ENCODE measurements at regions of chr7 and their contacts with region 1.

Region 1: GRCh38 chr7:41045556-41046123 is 657.2 kb downstream of the INHBA start:
- DNase-seq: peak; percentile 66 to 72
- H3K4me3 ChIP-seq: no peak overlapping the region
- H3K27ac ChIP-seq: no peak overlapping the region
- H3K4me1 ChIP-seq: no peaks in the 10 kb centered on the region
- H3K27me3 ChIP-seq: no peaks in the 10 kb centered on the region
- CTCF ChIP-seq: peak in 2 of 3 donors; percentile 65 to 67
- POLR2A ChIP-seq: no peak

Region 2: GRCh38 chr7:41031611-41032010 is 14.0 kb before region 1 on chr7:
- intact Hi-C with region 1: loop called (anchors 1 kb)
- DNase-seq: no peak
- H3K4me3 ChIP-seq: no peak overlapping the region
- H3K27ac ChIP-seq: no peak overlapping the region
- H3K4me1 ChIP-seq: no peaks in the 10 kb centered on the region
- H3K27me3 ChIP-seq: no peaks in the 10 kb centered on the region
- CTCF ChIP-seq: no peak
- POLR2A ChIP-seq: no peak

Region 3: DNA sequence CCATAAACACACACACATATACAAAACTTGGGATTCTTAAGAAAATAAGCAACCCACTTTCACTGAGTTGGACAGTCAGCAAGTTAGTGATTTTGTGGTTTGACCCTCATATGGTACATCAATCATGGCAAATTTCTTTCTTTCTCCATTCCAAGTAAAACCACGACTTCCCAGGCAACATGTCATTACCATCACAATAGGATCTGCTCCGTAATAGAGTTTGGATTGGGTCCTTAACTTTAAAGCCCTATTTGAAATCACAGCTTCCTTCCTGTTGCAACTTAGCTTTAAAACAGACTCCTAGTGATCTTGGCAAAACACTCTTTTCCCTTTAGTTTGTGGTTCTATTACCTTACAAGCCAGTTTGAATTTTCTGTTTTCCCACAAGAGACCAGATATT is 173.6 kb after region 1 on chr7:
- intact Hi-C with region 1: no loop called
- DNase-seq: no peak
- H3K4me3 ChIP-seq: no peak overlapping the region
- H3K27ac ChIP-seq: no peak overlapping the region
- H3K4me1 ChIP-seq: no peaks in the 10 kb centered on the region
- H3K27me3 ChIP-seq: no peaks in the 10 kb centered on the region
- CTCF ChIP-seq: no peak
- POLR2A ChIP-seq: no peak

Region 4: GRCh38 chr7:41996381-41997035 is 950.9 kb after region 1 on chr7:
- intact Hi-C with region 1: no loop called
- DNase-seq: no peak
- H3K4me3 ChIP-seq: no peak overlapping the region
- H3K27ac ChIP-seq: peak overlapping the region in 1 of 2 donors; percentile 10
- H3K4me1 ChIP-seq: peaks cover 0 to 5% of the 10 kb centered on the region in 2 donors
- H3K27me3 ChIP-seq: no peaks in the 10 kb centered on the region
- CTCF ChIP-seq: no peak
- POLR2A ChIP-seq: no peak